Activated T-helper 1 cell treated with anti-CD3 and anti-CD28 coated beads, Interleukin-12 subunit alpha, Interleukin-12 subunit beta, Interleukin-2, Interleukin-4 antibody, amounts not matched to agents 30 ng/mL and 10 ng/mL and 1 ng/mL, durations not matched to agents 14 hours and 24 hours and 36 hours (primary cell): ENCODE measurements at regions of chr9 and their contacts with region 1.

Region 1: DNA sequence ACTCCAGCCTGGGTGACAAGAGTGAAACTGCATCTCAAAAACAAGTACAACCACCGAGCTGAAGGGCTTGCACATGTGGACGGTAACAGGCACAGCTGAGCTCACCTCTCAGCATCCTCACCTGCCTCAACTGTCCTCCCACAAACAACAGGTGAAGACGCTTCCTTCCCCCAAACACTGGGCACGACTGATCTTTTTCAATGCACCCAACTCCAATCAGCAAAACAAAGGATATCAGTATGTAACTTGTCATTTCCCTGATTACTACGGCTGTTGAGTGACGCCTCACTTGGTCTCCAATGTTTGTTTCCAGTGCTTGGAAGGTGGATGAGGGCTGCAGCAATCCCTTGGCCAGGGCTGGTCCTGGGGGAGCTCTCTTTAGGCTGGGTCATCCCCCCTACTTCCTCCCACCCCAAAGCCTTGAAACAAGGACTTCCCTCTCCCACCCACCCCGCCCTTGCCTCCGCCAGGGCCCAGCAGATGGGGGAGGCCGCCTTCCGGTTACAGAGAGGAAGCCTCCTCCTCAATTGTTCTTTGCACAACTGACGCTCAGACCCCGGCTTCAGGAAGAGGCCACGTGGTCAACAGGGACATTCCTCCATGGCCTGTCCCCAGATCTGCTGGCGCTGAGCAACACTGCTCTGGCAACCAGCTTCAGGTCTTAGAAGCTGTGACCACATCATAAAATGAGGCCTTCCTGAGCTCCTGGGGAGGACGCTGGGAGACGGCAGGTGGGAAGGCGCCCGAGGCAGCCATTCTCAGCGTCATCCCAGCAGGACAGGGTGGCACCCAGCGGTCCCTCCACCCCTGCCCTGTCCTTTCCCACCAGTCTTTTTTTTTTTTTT is 5.9 kb downstream of the FAM78A start:
- DNase-seq: no peak
- H3K4me3 Mint-ChIP-seq: peak overlapping the region; percentile 100
- H3K27ac Mint-ChIP-seq: peak overlapping the region; percentile 86
- H3K4me1 Mint-ChIP-seq: peaks cover 75% of the 10 kb centered on the region
- H3K27me3 Mint-ChIP-seq: no peaks in the 10 kb centered on the region

Region 2: DNA sequence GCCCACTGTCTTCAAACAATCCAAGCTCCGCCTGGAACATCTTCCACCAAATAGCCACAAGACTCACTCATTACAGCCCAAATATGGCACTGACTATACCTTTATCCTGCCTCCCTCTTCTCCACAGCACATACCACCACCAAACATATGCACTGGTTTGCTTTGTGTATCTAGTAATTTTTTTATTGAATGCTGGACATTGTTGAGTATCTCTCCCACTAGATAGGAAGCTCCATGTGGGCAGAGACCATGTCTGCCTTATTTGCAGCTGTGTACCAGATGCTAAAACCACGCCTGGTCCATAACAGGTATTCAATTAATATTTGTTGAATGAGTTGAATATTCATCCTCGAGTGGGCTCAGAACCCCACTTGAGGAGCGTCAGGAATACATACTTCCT is 758.2 kb before region 1 on chr9:
- intact Hi-C with region 1: no loop called
- DNase-seq: no peak
- H3K4me3 Mint-ChIP-seq: no peak overlapping the region
- H3K27ac Mint-ChIP-seq: no peak overlapping the region
- H3K4me1 Mint-ChIP-seq: no peaks in the 10 kb centered on the region
- H3K27me3 Mint-ChIP-seq: peaks cover 4% of the 10 kb centered on the region

Region 3: DNA sequence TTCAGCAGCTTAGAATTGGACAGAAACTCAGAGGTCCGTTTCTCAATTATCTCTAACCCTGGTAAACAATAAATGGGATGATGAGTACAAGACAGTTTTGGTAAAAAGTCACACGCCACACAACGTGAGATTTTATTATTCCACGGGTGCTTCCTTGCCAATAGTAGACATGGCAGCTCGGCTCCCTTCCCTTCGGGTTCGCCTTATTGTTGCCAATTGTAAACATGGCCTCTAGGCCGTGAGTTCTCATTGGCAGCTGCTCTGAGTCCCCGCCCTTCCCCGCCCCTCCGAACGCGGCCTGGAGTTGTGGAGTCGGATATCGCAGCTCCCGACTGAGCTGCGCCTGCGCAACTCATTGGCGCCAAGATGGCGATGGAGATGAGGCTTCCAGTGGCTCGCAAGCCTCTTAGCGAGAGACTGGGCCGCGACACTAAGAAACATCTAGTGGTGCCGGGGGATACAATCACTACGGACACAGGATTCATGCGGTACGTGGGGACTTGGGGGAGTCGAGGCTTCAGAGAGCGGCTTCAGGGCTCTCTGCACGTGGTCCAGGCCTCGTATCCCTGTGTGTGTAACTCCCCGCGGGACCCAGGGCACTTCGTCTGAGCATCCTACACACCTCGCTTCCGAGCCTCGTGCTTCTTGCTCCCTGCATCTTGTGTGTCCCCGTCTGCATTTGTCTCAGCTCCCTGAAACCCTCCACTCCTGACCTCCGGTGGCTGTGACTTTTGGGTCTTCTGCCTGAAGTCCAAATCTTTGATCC is 576.8 kb before region 1 on chr9 and contains the start of gene EXOSC2:
- intact Hi-C with region 1: loop called (anchors 5 kb)
- DNase-seq: peak; percentile 88
- H3K4me3 Mint-ChIP-seq: peak within 1 kb of the TSS; percentile 99
- H3K27ac Mint-ChIP-seq: peak within 1 kb of the TSS; percentile 97
- H3K4me1 Mint-ChIP-seq: peaks cover 54% of the 10 kb centered on the region
- H3K27me3 Mint-ChIP-seq: peaks cover 3% of the 10 kb centered on the region
- total RNA-seq, gene EXOSC2: 107 TPM in 2 replicates

Region 4: GRCh38 chr9:131237931-131238401 is 32.4 kb before region 1 on chr9:
- intact Hi-C with region 1: loop called (anchors 2 kb)
- DNase-seq: peak; percentile 82
- H3K4me3 Mint-ChIP-seq: peak overlapping the region; percentile 58
- H3K27ac Mint-ChIP-seq: peak overlapping the region; percentile 90
- H3K4me1 Mint-ChIP-seq: peaks cover 35% of the 10 kb centered on the region
- H3K27me3 Mint-ChIP-seq: no peaks in the 10 kb centered on the region

Region 5: DNA sequence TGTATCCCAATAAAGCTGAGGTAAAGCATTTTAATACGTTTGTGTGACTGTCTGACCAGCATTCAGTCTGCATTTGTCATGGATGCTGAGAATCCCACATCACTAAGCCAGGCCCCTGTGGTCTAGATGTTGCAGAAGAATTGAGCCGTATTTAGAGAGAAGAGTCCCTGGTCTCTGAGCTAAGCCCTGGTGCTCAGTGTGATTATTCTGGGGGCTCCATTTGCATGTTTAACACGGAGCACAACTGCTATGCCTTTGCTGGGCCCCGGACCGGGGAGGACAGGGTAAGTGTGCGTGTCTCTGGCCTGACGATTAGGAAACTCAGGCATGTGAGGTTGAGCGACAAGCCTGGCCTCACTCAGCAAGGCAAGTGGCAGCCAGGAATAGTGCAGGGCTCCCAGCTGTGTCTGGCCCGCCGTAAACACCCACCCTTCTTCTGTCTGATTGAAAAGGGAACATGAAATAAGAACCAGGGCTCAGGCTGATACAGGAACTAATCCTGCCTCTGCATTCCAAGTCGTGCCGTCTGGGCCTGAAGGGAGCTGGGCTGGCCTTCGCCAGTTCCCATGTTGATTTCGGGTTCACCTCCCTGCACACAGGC is 16.4 kb before region 1 on chr9:
- intact Hi-C with region 1: loop called (anchors 1 kb)
- DNase-seq: no peak
- H3K4me3 Mint-ChIP-seq: no peak overlapping the region
- H3K27ac Mint-ChIP-seq: peak overlapping the region; percentile 29
- H3K4me1 Mint-ChIP-seq: peaks cover 46% of the 10 kb centered on the region
- H3K27me3 Mint-ChIP-seq: no peaks in the 10 kb centered on the region

Region 6: DNA sequence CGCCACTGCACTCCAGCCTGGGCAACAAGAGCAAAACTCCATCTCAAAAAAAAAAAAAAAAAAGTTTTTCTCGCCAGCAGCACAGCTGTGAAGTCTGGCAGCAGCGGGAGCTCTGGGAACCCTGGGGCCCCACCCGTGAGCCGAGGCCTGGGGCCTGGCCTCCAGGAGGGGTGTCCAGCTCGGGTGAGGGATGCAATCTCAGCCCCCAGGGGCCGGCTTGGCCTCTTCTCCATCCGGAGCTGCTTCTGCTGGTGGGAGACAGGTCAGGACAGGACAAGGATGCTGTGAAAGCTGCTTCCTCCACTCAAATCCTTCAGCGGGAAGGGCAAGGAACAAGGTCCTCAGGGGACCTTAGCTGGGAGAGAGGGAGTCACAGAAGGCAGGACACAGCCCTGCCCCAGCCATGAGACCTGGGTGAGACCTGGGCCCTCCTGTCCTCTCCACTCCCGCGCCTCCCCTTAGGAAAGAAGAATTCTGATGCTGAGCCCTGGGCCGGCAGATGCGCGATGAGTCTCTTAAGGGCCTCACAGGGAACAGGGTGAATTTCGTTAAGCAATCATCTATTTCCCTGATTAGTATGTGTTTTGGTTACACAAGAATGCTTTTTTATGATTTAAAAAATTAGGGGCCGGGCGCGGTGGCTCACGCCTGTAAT is 49.8 kb after region 1 on chr9:
- intact Hi-C with region 1: no loop called
- DNase-seq: no peak
- H3K4me3 Mint-ChIP-seq: no peak overlapping the region
- H3K27ac Mint-ChIP-seq: no peak overlapping the region
- H3K4me1 Mint-ChIP-seq: no peaks in the 10 kb centered on the region
- H3K27me3 Mint-ChIP-seq: peaks cover 2% of the 10 kb centered on the region

Region 7: DNA sequence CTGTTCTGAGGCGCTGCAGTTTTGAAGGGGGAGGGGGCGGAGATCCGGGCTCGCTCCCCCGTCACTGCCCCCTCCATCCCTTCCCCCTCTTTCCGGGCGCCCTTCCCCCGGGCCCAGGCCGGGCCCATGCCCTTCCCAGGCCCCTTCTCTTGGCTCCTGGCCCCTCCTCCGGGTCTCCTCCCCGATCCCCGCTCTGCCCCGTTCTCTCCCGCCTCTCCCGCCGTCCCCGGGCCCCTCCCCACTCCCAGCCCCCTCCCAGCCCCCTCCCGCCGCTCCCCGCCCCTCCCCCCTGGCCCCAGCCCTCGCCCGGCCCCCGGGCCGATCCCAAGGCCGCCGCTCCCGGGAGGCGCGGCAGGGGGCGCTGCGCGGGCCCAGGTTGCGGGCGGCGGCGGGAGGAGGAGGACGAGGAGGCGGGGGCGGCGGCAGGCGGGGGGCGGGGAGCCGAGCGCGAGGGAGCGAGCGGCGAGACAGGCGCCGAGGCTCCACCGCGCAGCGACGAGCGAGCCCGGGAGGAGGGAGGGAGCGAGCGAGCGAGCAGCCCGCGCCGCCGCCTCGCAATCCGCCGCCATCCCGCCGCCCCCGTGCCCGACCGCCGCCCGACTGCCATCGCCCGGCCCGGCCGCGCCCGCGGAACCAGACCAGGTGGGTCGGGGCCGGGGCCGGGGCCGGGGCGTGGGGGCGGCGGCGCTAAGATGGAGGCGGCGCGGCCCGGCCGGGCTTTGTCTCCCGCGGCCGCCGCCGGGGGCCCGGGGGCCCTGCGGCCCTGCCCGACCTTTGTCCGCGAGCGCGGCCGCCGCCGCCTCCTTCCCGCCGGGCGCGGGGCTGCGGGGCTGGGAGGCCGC is 123.5 kb after region 1 on chr9 and contains the start of gene PRRC2B:
- intact Hi-C with region 1: loop called (anchors 5 kb)
- DNase-seq: peak; percentile 76
- H3K4me3 Mint-ChIP-seq: peak within 1 kb of the TSS; percentile 89
- H3K27ac Mint-ChIP-seq: peak within 1 kb of the TSS; percentile 93
- H3K4me1 Mint-ChIP-seq: peaks cover 49% of the 10 kb centered on the region
- H3K27me3 Mint-ChIP-seq: peaks cover 21% of the 10 kb centered on the region
- total RNA-seq, gene PRRC2B: 103 and 108 TPM in 2 replicates

Region 8: DNA sequence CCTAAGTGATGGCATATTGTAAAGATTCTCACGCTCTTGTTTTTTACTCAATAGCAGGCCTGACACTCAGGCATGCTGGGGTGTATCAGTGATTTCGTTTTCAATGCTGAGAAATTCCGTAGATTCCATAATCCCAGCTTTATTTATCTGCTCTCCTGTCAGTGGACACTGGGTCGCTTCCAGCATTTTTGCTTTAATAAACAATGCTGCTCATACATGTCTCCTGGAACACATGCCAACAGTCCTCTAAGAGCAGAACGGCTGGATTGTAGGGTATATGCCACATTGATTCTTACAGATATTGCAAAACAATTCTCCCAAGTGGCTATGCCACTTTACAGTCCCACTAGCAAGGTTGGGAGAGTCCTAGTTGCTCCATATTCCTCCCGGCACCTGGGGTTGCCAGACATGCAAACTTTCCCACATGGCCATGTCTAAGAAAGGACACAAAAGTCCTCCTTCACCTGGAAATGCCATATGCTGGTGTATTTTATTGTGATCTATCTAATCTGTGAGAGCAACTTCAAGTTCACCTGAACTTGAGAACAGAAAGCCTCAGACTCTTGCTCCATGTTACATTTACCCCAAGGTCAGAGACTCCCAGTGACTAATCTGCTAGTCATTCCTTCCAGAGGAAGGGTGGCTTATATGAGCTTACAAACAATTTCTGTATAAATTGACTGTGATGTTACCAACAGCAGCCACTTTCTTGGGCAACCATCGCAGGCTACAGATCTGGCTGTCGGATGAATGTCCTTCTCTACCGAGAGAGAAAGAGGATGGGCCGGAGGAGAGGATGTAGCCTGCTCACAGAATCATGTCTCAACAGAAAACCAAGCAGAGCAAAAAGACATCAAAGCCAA is 387.7 kb after region 1 on chr9:
- intact Hi-C with region 1: loop called (anchors 1 kb)
- DNase-seq: no peak
- H3K4me3 Mint-ChIP-seq: peak overlapping the region; percentile 73
- H3K27ac Mint-ChIP-seq: peak overlapping the region; percentile 100
- H3K4me1 Mint-ChIP-seq: peaks cover 91% of the 10 kb centered on the region
- H3K27me3 Mint-ChIP-seq: no peaks in the 10 kb centered on the region

Region 9: GRCh38 chr9:132042324-132042723 is 771.9 kb after region 1 on chr9:
- intact Hi-C with region 1: no loop called
- DNase-seq: no peak
- H3K4me3 Mint-ChIP-seq: no peak overlapping the region
- H3K27ac Mint-ChIP-seq: no peak overlapping the region
- H3K4me1 Mint-ChIP-seq: no peaks in the 10 kb centered on the region
- H3K27me3 Mint-ChIP-seq: no peaks in the 10 kb centered on the region